SK-MEL-5 (cell line): ENCODE measurements at regions of chr9 and their contacts with region 1.

Region 1: GRCh38 chr9:116589392-116590354 is 97.4 kb upstream of the TRIM32 start:
- DNase-seq: peak; percentile 90

Region 2: DNA sequence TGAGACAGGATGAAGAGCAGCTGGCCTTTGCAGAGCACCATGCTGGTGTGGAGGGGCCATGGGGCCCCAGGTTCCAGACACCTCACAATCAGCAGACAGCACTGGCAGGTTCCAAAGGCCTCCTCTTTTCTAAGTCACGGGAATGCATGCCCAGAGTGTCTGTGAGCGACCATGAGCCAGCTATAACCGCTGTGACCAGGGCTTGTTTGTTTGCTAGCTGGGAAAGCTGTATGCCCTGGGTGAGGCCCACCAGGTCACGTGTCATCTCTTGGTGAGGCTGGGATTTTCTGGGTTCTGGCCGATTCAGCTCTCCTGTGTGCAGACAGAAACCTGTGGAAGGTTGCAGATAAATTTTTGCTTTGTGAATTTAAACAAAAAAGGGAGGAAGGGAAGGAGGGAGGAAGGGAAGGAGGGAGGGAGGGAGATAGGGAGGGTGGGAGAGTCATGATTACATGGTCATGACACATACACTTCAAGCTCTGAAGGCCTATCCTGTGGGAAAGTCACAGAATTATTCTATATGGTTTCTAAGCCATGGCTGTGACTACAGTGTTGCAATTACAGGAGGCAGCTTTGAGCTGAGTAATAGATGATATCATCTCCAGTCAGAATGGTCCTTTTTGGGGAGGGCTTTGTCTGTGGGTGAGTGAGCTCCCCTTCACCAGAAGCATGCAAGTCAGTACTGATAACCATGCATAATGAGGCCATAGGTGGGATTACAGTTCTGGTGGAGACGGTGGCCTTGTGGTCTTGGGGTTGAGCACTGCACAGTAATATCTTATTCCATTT is 398.8 kb before region 1 on chr9:
- in situ Hi-C with region 1: no loop called
- DNase-seq: no peak

Region 3: GRCh38 chr9:116661037-116661954 is 71.6 kb after region 1 on chr9:
- in situ Hi-C with region 1: loop called (anchors 10 kb)
- DNase-seq: peak; percentile 79